ENCODE measurements at regions of chrX and their contacts with region 1.

Region 1: DNA sequence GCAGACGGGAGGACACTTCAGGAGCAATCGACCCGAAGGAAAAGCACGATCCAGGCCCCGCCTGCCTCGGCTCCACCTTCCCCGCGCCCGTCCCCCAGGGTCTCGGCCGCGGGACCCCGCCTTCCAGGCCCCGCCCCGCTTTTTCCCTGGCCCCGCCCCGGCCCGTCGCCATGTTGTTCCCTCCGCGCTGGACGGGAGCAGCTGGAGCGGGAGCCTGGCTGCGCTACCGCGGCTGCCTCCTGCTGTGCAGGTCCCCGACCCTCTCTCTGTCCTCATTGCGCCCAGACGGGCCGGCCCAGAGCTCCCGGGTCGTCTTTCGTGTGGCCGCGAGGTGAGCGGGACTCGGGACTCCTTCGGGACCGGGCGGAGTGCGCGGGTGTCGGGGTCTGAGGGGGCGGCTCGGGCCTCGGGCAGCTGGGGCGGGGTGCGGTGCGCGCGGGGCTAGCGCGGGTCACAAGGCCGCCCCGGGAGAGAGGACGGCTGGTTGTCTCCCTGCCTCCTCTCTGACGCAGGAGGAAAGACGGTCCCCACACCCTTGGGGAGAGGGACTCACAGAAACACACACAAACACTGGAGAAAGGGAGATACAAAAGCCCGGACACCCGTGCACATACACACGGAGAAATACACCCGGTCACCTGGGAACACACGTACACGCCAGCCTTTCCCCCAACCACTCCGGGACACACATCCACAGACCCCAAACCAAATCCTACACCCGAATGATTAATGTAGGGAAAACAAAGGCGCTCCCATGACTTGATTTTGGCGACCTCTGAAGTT is at the start of gene RAB9A:
- DNase-seq: peak; percentile 84
- ATAC-seq: peak; percentile 94
- H3K4me3 Mint-ChIP-seq: peak within 1 kb of the TSS; percentile 87
- H3K27ac Mint-ChIP-seq: no peak within 1 kb of the TSS
- H3K4me1 Mint-ChIP-seq: peaks cover 32% of the 10 kb centered on the region
- H3K27me3 Mint-ChIP-seq: peaks cover 19% of the 10 kb centered on the region
- CTCF ChIP-seq: no peak
- total RNA-seq, gene RAB9A: 18.9 to 26.3 TPM (median 20.7 TPM) in 3 replicates

Region 2: DNA sequence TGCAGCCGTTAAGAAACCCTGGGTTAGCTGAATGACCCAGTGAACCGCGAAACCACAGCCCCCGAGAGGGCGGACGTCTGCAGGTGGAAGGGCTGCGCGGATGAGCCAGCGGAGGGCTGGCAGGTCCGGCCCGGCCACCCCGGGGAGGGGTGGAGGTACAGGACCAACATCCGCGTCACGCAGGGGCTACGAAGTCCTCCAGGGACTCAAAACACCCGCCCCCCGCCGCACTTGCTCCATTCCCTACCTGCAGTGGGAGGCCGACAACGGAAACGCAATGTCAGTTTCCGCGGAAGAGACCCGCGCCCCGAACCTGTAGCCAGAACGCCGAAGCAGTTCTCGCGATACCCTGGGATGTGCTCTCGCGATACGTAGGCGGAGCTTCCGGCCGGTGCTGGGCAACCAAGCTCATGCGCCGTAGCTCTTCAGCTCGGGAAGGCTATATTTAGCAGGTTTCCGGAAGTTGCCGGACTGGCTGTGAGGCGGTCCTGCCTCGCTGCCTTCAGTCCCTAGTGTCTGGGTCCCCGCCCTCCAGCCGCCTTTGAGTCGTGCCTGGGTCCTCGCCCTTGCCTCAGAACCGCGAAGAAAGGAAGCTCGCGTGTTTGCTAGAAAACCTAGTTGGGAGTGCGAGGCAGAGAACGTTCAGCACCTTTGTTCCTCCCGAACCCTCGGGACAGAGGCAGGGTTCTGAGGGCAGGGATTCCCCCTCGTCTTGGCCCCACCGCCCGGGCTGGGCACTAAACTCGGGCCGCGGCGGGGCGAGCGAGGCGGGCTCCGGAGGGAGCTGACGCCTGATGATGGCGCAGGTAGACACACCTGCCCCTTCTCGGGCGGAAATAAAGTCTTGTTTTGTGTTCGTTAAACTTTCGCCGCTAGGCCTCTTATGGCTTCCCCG is 45.4 kb after region 1 on chrX and contains the starts of genes OFD1 and TRAPPC2:
- CTCF ChIA-PET with region 1: interaction called, 3 read pairs
- POLR2A ChIA-PET with region 1: interaction called, 12 read pairs
- DNase-seq: peak; percentile 90
- ATAC-seq: peak; percentile 99
- H3K4me3 Mint-ChIP-seq: peak within 1 kb of the TSS; percentile 93
- H3K27ac Mint-ChIP-seq: peak within 1 kb of the TSS; percentile 98
- H3K4me1 Mint-ChIP-seq: peaks cover 11% of the 10 kb centered on the region
- H3K27me3 Mint-ChIP-seq: no peaks in the 10 kb centered on the region
- CTCF ChIP-seq: no peak
- total RNA-seq, gene OFD1: 22.8 to 25.1 TPM (median 23.4 TPM) in 3 replicates
- total RNA-seq, gene TRAPPC2: 10.2 to 13.9 TPM (median 10.7 TPM) in 3 replicates